Activated T-helper 1 cell treated with anti-CD3 and anti-CD28 coated beads, Interleukin-12 subunit alpha, Interleukin-12 subunit beta, Interleukin-2, Interleukin-4 antibody, amounts not matched to agents 30 ng/mL and 10 ng/mL and 1 ng/mL, durations not matched to agents 14 hours and 24 hours and 36 hours (primary cell): ENCODE measurements at regions of chr3 and their contacts with region 1.

Region 1: GRCh38 chr3:59212128-59212779 is 162.4 kb upstream of the CFAP20DC start:
- DNase-seq: no peak
- H3K4me3 Mint-ChIP-seq: no peak overlapping the region
- H3K27ac Mint-ChIP-seq: no peak overlapping the region
- H3K4me1 Mint-ChIP-seq: peaks cover 11% of the 10 kb centered on the region
- H3K27me3 Mint-ChIP-seq: peaks cover 14% of the 10 kb centered on the region

Region 2: DNA sequence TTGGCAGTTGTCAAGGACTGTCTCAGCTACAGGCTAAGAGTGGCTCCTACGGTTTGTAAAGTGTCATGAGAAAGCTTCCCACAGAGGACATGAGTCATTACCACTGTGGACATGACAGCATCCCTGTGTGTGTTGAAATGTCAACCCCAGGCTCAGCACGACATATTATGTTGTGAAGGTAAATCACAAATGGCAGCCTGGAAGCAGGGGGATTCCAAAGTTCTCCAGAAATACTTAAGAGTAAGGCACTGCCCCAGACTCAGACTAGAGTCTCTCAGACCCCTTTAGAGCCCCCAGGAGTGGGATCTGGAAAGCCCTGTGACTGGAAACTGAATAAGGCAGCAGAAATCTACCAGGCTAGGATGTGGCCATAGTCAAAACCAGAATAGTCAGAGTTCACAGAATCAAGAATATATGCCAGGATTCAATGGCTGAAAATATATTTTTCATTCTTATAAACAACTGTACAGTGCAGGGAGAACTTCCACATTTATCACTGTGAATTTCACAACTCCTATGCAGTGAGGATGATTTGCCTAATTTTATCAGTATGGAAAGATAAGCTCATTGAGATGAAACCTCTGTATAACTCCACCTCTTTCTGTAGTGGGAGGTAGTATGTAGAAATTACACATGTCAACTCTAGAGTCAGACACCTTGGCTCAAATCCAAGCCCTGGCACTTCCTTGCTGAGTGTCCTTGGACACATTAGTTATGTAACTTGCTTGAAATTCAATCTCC is 74.7 kb after region 1 on chr3:
- intact Hi-C with region 1: loop called (anchors 1 kb)
- DNase-seq: peak; percentile 29
- H3K4me3 Mint-ChIP-seq: peak overlapping the region; percentile 1
- H3K27ac Mint-ChIP-seq: peak overlapping the region; percentile 91
- H3K4me1 Mint-ChIP-seq: peaks cover 37% of the 10 kb centered on the region
- H3K27me3 Mint-ChIP-seq: no peaks in the 10 kb centered on the region

Region 3: GRCh38 chr3:59424268-59425010 is 212.2 kb after region 1 on chr3:
- intact Hi-C with region 1: loop called (anchors 2 kb)
- DNase-seq: no peak
- H3K4me3 Mint-ChIP-seq: no peak overlapping the region
- H3K27ac Mint-ChIP-seq: peak overlapping the region; percentile 3
- H3K4me1 Mint-ChIP-seq: peaks cover 52% of the 10 kb centered on the region
- H3K27me3 Mint-ChIP-seq: no peaks in the 10 kb centered on the region

Region 4: DNA sequence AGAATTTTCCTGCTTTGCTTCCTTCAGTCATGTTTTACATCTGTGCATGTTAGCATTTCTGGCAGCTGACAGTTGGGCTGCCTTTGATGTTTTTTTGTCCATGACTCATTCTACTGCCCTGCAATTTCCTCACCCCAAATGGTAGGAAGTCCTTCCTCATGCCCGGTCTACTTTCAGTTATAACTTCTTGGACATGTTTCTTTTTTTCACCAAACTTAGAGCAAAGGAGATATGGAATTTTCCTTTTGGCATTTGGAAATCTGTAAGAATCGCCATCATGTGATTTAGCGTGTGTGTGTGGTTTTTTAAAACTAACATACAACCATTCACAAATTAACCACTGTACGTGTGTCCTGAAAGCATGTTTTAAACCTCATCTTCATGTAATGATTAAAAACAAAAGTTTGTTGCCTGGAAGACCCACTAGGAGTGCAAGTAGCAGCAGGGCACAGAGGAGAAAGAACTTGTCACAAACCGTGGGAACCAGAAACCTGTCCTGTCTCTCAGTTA is 268.3 kb after region 1 on chr3:
- intact Hi-C with region 1: loop called (anchors 1 kb)
- DNase-seq: no peak
- H3K4me3 Mint-ChIP-seq: peak overlapping the region; percentile 52
- H3K27ac Mint-ChIP-seq: peak overlapping the region; percentile 72
- H3K4me1 Mint-ChIP-seq: peaks cover 41% of the 10 kb centered on the region
- H3K27me3 Mint-ChIP-seq: no peaks in the 10 kb centered on the region

Region 5: DNA sequence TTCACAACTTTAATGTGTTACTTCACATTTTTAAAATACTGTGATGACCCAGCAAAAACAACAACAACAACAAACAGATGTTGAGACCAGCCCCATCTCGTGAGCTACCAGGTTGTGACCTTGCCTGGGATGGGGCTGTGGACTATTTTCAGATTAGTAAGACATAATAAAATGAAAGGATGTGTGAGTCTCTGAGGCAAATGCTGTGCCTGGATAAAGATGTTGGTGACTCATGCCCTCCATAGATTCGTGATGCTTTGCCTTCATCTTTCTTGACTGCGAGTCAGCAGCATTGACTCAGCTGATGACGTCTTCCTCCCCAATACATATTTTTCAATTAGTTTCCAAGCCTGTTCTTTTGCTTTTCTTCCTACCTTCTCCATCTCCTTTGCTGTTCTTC is 290.6 kb after region 1 on chr3:
- intact Hi-C with region 1: no loop called
- DNase-seq: no peak
- H3K4me3 Mint-ChIP-seq: no peak overlapping the region
- H3K27ac Mint-ChIP-seq: peak overlapping the region; percentile 21
- H3K4me1 Mint-ChIP-seq: peaks cover 16% of the 10 kb centered on the region
- H3K27me3 Mint-ChIP-seq: no peaks in the 10 kb centered on the region

Region 6: GRCh38 chr3:59809710-59810444 is 597.6 kb after region 1 on chr3:
- intact Hi-C with region 1: loop called (anchors 1 kb)
- DNase-seq: no peak
- H3K4me3 Mint-ChIP-seq: no peak overlapping the region
- H3K27ac Mint-ChIP-seq: no peak overlapping the region
- H3K4me1 Mint-ChIP-seq: no peaks in the 10 kb centered on the region
- H3K27me3 Mint-ChIP-seq: no peaks in the 10 kb centered on the region

Region 7: DNA sequence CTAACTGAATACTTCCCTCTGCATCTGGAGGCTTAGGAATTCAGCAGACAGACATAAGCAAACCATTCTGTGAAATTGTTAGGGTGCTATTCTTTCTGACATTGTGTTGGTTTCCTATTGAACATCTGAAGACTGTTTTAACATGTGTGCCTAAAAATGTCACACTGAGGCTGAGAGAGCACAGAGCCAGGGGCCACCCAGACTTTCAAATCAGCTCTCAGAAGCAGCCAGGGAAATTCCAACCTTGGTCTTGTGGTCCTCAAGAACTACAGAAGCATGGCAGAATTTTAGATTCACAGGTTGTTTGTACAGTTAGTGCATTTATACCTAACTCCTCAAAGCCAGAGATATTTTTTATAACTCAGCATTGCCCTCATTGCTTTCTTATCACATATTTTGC is 766.7 kb after region 1 on chr3:
- intact Hi-C with region 1: loop called (anchors 2 kb)
- DNase-seq: peak; percentile 38
- H3K4me3 Mint-ChIP-seq: peak overlapping the region; percentile 64
- H3K27ac Mint-ChIP-seq: peak overlapping the region; percentile 93
- H3K4me1 Mint-ChIP-seq: peaks cover 45% of the 10 kb centered on the region
- H3K27me3 Mint-ChIP-seq: no peaks in the 10 kb centered on the region